ENCODE measurements at regions of chr9 and their contacts with region 1.

Region 1: GRCh38 chr9:128275996-128276573 is at the starts of genes GOLGA2 and SWI5:
- DNase-seq: peak; percentile 95 to 100
- H3K4me3 ChIP-seq: peak within 1 kb of the TSS; percentile 78 to 91
- H3K27ac ChIP-seq: peak within 1 kb of the TSS; percentile 86 to 87
- H3K4me1 ChIP-seq: peaks cover 6 to 20% of the 10 kb centered on the region in 2 donors
- H3K27me3 ChIP-seq: no peaks in the 10 kb centered on the region
- CTCF ChIP-seq: no peak
- total RNA-seq, gene GOLGA2: 74.9 TPM
- total RNA-seq, gene SWI5: 1.8 TPM

Region 2: GRCh38 chr9:127644943-127645342 is 631.1 kb before region 1 on chr9:
- intact Hi-C with region 1: no loop called
- DNase-seq: no peak
- H3K4me3 ChIP-seq: no peak overlapping the region
- H3K27ac ChIP-seq: no peak overlapping the region
- H3K4me1 ChIP-seq: peaks cover 0 to 11% of the 10 kb centered on the region in 2 donors
- H3K27me3 ChIP-seq: no peaks in the 10 kb centered on the region
- CTCF ChIP-seq: no peak

Region 3: DNA sequence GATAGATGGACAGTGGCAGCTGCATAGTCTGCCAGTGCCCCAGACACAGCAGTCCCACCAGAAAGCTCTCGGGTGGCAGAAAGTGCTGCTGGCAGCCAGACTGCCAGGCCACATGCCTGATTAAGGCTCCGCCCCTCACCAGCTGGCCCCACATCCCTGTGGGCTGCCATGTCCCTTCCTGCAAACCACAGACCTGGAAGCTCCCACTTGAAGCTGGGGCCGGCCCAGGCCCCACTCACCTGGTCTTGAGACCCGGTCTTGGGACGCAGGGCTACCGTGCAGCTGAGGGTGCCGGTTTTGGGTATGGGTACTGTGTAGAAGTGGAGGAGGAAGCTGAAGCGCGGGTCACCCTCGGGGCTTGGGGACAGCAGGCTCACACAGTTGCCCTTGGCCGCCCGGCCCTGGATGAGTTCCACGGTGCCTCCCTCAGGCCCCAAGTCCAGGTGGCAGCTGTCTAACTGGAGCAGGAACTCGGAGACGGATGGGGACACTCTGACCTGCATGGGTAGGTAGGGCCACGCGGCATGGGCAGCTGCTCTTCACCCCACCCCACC is 458.1 kb before region 1 on chr9:
- intact Hi-C with region 1: no loop called
- DNase-seq: peak in 1 of 2 donors; percentile 63
- H3K4me3 ChIP-seq: no peak overlapping the region
- H3K27ac ChIP-seq: peak overlapping the region in 1 of 2 donors; percentile 36
- H3K4me1 ChIP-seq: no peaks in the 10 kb centered on the region
- H3K27me3 ChIP-seq: no peaks in the 10 kb centered on the region
- CTCF ChIP-seq: no peak

Region 4: GRCh38 chr9:128159784-128160602 is 116.1 kb before region 1 on chr9 and contains the start of gene BBLN:
- intact Hi-C with region 1: loop called (anchors 2 kb)
- DNase-seq: peak; percentile 63 to 97
- H3K4me3 ChIP-seq: peak within 1 kb of the TSS; percentile 59 to 90
- H3K27ac ChIP-seq: peak within 1 kb of the TSS; percentile 59 to 66
- H3K4me1 ChIP-seq: peaks cover 0 to 18% of the 10 kb centered on the region in 2 donors
- H3K27me3 ChIP-seq: no peaks in the 10 kb centered on the region
- CTCF ChIP-seq: no peak
- total RNA-seq, gene BBLN: 389 TPM

Region 5: DNA sequence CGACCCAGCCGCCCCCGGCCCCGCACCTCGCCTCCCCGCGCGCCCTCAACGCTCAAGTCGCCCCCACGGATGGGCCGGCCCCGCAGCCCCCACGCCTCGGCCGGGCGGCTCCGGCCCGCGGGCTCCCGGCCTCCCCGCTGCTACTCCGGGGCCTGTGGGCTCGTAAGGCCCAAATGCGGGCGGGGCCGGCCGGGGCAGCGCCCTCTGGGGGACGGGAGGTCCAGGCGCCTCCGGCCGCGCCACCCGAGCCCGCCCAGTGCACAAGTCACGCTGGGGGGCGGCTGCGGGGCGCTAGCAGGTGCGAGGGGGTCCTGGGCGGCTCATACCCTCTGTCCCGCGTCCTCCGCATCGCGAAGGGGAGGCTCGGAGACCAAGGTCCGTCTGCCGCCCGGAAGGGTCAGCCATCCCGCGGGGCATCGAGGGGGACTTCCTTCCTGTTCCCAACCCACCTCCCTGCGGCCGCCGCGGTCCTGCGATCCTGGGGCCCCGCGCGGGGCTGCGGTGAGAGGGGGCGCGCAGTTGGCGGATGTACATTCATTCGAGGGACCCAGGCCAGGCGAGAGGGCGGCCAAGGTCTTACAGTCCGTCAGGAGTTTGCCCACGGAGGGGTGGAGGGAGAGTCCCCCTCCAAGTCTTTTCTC is 84.6 kb before region 1 on chr9 and contains the start of gene CIZ1:
- intact Hi-C with region 1: loop called (anchors 5 kb)
- DNase-seq: peak in 1 of 2 donors; percentile 89
- H3K4me3 ChIP-seq: peak within 1 kb of the TSS; percentile 69 to 97
- H3K27ac ChIP-seq: peak within 1 kb of the TSS; percentile 77
- H3K4me1 ChIP-seq: peaks cover 0 to 13% of the 10 kb centered on the region in 2 donors
- H3K27me3 ChIP-seq: no peaks in the 10 kb centered on the region
- CTCF ChIP-seq: peak; percentile 76 to 81 (median 78)
- total RNA-seq, gene CIZ1: 85.8 TPM

Region 6: DNA sequence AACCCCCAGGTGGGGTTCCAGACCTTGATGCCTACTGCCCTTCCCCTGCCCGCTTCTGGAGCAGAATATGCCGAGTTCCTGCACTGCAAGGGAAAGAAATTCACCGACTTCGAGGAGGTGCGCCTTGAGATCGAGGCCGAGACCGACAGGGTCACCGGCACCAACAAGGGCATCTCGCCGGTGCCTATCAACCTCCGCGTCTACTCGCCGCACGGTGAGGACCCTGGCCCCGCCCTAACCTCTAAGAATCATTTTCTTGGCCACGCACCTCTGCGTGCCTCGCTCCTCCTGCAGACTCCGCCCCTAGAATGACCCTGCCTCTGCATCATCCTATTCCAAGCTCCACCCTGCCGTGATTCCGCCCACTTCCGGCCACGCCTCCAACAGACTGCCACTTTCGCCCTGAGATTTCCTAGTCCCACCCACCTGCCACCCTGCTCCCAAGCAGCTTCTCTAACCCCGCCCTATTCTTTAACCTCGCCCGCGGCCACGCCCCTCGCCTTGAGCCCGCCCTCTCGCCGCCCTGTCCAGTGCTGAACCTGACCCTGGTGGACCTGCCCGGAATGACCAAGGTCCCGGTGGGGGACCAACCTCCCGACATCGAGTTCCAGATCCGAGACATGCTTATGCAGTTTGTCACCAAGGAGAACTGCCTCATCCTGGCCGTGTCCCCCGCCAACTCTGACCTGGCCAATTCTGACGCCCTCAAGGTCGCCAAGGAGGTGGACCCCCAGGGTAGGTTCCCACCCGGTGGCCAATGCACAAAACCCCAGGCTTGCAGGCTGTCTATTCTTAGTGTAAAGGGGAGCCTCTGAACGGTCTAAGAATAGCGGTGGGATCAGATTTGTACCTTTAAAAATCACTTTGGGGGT is 57.3 kb before region 1 on chr9:
- intact Hi-C with region 1: loop called (anchors 2 kb)
- DNase-seq: peak; percentile 74 to 96
- H3K4me3 ChIP-seq: peak overlapping the region; percentile 37 to 55
- H3K27ac ChIP-seq: no peak overlapping the region
- H3K4me1 ChIP-seq: peaks cover 0 to 2% of the 10 kb centered on the region in 2 donors
- H3K27me3 ChIP-seq: no peaks in the 10 kb centered on the region
- CTCF ChIP-seq: no peak

Region 7: DNA sequence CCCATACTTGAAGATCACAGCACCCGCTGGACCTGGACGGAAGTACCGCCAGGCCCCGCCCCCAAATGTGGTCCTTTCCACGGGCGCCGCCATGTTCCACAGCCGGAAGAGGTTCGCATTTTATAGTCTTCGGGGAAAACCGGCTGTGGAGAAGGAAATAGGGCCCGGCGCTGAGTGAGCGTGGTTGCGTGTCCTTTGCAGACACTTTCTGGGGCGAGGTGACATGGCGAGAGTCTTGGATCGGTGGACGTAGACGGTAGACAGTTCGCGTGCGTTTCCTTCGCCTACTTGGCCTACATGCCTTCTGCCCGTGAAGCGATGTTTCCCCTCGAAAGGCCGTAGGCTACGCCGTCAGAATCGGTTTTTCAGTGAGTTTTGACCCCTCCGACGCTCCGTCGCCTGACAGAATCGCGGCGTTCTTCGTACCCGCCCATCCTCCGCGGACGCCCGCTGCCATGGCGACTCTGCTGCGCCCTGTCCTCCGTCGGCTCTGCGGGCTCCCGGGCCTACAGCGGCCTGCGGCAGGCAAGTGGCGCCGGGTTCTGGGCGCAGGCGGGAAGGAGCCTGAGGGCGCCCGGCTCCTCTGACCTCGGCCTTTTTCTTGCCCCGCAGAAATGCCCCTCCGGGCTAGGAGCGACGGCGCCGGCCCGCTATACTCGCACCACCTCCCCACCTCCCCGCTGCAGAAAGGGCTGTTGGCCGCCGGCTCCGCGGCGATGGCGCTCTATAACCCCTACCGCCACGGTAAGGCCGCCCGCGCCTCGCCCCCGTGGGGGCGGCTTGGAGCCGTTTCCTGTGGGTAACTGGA is 46.5 kb after region 1 on chr9 and contains the starts of genes COQ4 and TRUB2:
- intact Hi-C with region 1: loop called (anchors 1 kb)
- DNase-seq: peak; percentile 72 to 97
- H3K4me3 ChIP-seq: peak within 1 kb of the TSS; percentile 72 to 76
- H3K27ac ChIP-seq: peak within 1 kb of the TSS; percentile 82 to 85
- H3K4me1 ChIP-seq: peaks cover 11 to 17% of the 10 kb centered on the region in 2 donors
- H3K27me3 ChIP-seq: no peaks in the 10 kb centered on the region
- CTCF ChIP-seq: no peak
- total RNA-seq, gene COQ4: 11.4 TPM
- total RNA-seq, gene TRUB2: 10.2 TPM

Measured in ascending aorta (tissue), 2 donors.